ENCODE measurements at regions of chr1 and their contacts with region 1.

Region 1: DNA sequence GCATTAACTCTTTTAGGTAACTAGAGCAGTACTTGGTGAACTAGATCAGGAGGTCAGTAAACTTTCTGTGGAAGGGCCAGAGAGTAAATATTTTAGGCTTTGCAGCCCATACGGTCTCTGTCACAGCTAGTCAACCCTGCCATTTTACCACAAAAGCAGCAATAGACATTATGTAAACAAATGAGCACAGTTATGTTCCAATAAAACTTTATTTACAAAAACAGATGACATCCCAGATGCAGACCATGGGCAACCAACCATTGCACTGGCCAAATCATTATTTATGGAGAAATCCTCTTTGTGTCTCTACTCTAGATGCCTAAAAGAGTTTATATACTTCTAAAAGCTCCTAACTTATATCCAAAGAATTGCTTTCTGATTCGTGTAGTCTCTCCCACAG is 192.4 kb downstream of the HS2ST1 start:
- DNase-seq: no peak
- ATAC-seq: no peak
- H3K4me3 ChIP-seq: no peak overlapping the region
- H3K27ac ChIP-seq: no peak overlapping the region
- H3K4me1 ChIP-seq: peaks cover 0 to 13% (median 0%) of the 10 kb centered on the region in 9 donors
- H3K27me3 ChIP-seq: no peaks in the 10 kb centered on the region
- CTCF ChIP-seq: no peak

Region 2: DNA sequence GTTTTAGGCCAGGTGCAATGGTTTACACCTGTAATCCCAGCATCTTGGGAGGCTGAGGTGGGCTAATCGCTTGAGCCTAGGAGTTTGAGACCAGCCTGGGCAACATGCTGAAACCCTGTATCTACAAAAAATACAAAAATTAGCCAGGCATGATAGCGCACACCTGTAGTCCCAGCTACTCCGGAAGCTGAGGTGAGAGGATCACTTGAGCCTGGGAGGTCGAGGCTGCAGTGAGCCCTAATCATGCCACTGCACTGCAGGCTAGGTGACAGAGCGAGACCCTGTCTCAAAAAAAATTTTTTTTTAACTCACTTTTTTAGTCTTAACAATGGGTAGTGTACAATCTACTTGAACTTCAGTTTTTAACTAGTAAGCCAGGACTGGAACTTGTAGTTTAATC is 54.9 kb before region 1 on chr1:
- intact Hi-C with region 1: no loop called
- DNase-seq: no peak
- ATAC-seq: no peak
- H3K4me3 ChIP-seq: no peak overlapping the region
- H3K27ac ChIP-seq: no peak overlapping the region
- H3K4me1 ChIP-seq: peaks cover 0 to 6% (median 0%) of the 10 kb centered on the region in 9 donors
- H3K27me3 ChIP-seq: no peaks in the 10 kb centered on the region
- CTCF ChIP-seq: no peak

Region 3: GRCh38 chr1:87120779-87121178 is 13.9 kb after region 1 on chr1:
- intact Hi-C with region 1: loop called in 1 of 10 experiments (anchors 1 kb)
- DNase-seq: no peak
- ATAC-seq: no peak
- H3K4me3 ChIP-seq: no peak overlapping the region
- H3K27ac ChIP-seq: no peak overlapping the region
- H3K4me1 ChIP-seq: no peaks in the 10 kb centered on the region
- H3K27me3 ChIP-seq: no peaks in the 10 kb centered on the region
- CTCF ChIP-seq: no peak

Region 4: DNA sequence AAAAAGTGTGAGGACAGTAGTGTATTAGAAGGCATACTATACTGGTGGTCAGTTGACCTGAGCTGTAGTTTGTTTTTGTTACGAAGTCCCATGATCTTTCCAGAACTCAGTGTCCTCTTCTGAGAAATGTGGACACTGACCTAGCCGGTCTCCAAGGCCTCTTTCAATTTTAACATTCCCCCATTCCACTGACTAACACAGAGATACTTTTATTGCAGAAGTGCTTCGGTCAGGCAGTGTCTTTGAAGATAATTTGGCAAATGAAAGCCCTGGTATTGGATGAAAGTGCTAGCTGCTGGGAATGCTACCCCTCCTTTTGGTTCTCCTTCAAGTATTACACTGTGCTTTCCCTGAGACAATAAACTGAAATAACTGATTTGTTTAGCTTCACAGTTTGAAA is 311.2 kb after region 1 on chr1:
- intact Hi-C with region 1: no loop called
- DNase-seq: no peak
- ATAC-seq: peak in 1 of 8 donors; percentile 49
- H3K4me3 ChIP-seq: no peak overlapping the region
- H3K27ac ChIP-seq: no peak overlapping the region
- H3K4me1 ChIP-seq: no peaks in the 10 kb centered on the region
- H3K27me3 ChIP-seq: no peaks in the 10 kb centered on the region
- CTCF ChIP-seq: no peak

Measured in heart right ventricle (tissue), 16 donors.